ENCODE measurements at regions of chr2 and their contacts with region 1.

Region 1: GRCh38 chr2:202178342-202178958 is 59.9 kb downstream of the SUMO1 start:
- DNase-seq: no peak
- H3K4me3 ChIP-seq: no peak overlapping the region
- CTCF ChIP-seq: peak; percentile 65

Region 2: GRCh38 chr2:201780674-201781581 is 397.5 kb before region 1 on chr2 and contains the start of gene ALS2:
- CTCF ChIA-PET with region 1: interaction called, 11 read pairs
- POLR2A ChIA-PET with region 1: no interaction called
- DNase-seq: peak; percentile 96
- H3K4me3 ChIP-seq: peak within 1 kb of the TSS; percentile 88
- CTCF ChIP-seq: no peak

Region 3: DNA sequence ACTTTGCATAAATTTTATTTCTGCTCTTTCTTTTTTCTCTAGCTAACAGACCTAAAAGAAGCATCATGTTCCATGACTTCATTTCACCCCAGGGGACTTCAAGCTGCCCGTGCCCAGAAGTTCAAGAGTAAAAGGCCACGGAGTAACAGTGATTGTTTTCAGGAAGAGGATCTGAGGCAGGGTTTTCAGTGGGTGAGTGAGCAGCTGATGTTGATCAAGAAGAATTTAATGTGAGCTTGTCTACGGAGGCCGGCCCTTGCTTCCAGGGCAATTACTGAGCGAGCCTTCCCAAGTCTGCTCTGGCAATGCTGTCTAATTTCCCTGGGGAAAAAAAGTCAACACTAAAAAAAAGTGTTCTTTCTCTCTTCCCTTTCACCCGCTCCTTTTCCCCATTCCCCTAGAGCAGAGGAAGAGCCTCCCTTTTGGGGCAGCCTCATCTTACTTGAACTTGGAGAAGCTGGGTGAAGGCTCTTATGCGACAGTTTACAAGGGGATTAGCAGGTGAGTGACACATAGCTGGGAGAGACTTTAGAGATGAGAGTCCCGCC is 370.9 kb before region 1 on chr2:
- CTCF ChIA-PET with region 1: interaction called, 13 read pairs
- POLR2A ChIA-PET with region 1: no interaction called
- DNase-seq: no peak
- H3K4me3 ChIP-seq: peak overlapping the region; percentile 16
- CTCF ChIP-seq: no peak

Region 4: GRCh38 chr2:202043475-202043874 is 135.0 kb before region 1 on chr2:
- CTCF ChIA-PET with region 1: interaction called, 23 read pairs
- POLR2A ChIA-PET with region 1: no interaction called
- DNase-seq: no peak
- H3K4me3 ChIP-seq: no peak overlapping the region
- CTCF ChIP-seq: no peak

Region 5: GRCh38 chr2:202158796-202159195 is 19.7 kb before region 1 on chr2:
- CTCF ChIA-PET with region 1: interaction called, 11 read pairs
- POLR2A ChIA-PET with region 1: no interaction called
- DNase-seq: no peak
- H3K4me3 ChIP-seq: no peak overlapping the region
- CTCF ChIP-seq: peak; percentile 66

Region 6: GRCh38 chr2:202193305-202193704 is 14.9 kb after region 1 on chr2:
- CTCF ChIA-PET with region 1: interaction called, 21 read pairs
- POLR2A ChIA-PET with region 1: no interaction called
- DNase-seq: no peak
- H3K4me3 ChIP-seq: no peak overlapping the region
- CTCF ChIP-seq: no peak

Region 7: GRCh38 chr2:202203348-202203747 is 24.9 kb after region 1 on chr2:
- CTCF ChIA-PET with region 1: no interaction called
- POLR2A ChIA-PET with region 1: no interaction called
- DNase-seq: no peak
- H3K4me3 ChIP-seq: no peak overlapping the region
- CTCF ChIP-seq: no peak

Region 8: DNA sequence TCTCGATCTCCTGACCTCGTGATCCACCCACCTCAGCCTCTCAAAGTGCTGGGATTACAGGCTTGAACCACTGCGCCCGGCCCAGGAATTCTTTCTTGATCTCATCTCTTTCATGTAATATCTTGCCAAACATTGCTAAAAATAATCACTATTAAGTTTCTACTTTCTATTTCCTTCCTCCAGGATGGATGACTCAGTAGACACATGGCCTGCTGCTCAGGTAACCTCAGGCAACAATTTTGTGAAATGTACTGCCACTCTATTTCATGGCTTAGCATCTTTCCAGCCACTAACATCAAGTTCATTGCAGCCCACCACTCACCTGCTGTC is 71.0 kb after region 1 on chr2:
- CTCF ChIA-PET with region 1: no interaction called
- POLR2A ChIA-PET with region 1: no interaction called
- DNase-seq: no peak
- H3K4me3 ChIP-seq: no peak overlapping the region
- CTCF ChIP-seq: no peak